Astrocyte of the cerebellum (primary cell): ENCODE measurements at regions of chr14 and their contacts with region 1.

Region 1: GRCh38 chr14:78367355-78367754 is 197.2 kb downstream of the NRXN3 start:
- DNase-seq: no peak
- H3K4me3 ChIP-seq: no peak overlapping the region
- CTCF ChIP-seq: no peak

Region 2: DNA sequence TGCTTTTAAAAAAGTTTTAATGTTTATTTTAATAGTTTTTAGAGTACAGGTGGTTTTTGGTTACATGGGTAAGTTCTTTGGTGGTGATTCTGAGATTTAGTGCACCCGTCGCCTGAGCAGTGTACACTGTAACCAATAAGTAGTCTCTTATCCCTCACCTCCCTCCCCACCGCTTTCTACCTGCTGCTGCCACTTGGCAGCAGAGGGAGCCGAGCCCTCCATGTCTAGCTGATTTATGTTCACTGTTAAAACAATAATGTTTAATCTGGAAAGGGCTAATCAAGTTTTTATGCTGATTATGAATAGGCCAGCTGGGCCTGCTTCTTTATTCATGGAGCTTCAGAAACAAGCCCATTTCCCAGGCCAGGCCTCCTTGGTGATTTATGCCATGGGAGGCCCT is 494.4 kb before region 1 on chr14:
- in situ Hi-C with region 1: no loop called
- DNase-seq: no peak
- H3K4me3 ChIP-seq: no peak overlapping the region
- CTCF ChIP-seq: no peak

Region 3: DNA sequence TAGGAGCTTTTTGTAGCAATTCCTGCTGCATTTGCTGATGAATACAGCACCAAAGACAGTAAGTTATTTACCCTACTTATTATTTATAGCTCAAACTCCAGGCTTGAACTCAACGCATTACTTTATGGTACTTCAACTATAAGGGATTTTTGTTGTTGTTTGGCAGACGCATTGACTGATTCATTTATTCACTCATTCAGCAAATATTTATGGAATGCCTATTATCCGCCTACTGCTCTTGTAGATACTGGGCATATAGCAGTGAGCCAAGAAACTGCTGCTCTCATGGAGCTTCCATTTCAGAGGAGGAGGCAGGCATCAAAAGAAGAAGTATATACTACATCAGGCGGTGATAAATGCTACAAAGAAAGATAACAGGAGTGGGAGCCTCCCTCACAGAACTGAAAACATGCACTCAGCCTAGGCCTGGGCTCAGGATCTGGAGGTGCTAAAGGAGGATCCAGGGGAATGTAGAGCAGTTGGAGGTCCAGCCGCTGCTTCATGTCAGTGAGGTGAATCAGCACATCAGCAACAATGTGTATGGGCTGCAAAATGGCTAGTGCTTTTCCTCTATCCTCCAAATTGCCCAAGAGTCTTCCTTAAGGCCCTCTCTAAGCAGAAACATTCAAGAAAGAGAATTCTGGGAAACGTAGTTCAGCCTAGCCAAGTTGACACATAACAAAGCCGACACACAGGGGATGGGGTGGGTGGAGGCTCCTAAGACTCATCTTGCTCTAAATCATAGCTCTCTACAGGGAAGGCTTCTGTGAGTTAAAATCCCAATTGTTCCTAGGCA is 39.7 kb before region 1 on chr14:
- in situ Hi-C with region 1: loop called (anchors 5 kb)
- DNase-seq: no peak
- H3K4me3 ChIP-seq: no peak overlapping the region
- CTCF ChIP-seq: no peak

Region 4: GRCh38 chr14:78403278-78403815 is 36.0 kb after region 1 on chr14:
- in situ Hi-C with region 1: no loop called
- DNase-seq: peak; percentile 81
- H3K4me3 ChIP-seq: peak overlapping the region; percentile 34
- CTCF ChIP-seq: no peak

Region 5: GRCh38 chr14:78598041-78598920 is 230.9 kb after region 1 on chr14:
- in situ Hi-C with region 1: no loop called
- DNase-seq: peak; percentile 33
- H3K4me3 ChIP-seq: no peak overlapping the region
- CTCF ChIP-seq: peak; percentile 98